ENCODE measurements at regions of chrX and their contacts with region 1.

Region 1: GRCh38 chrX:117743469-117744251 is 372.9 kb downstream of the KLHL13 start:
- DNase-seq: peak; percentile 9
- H3K4me3 ChIP-seq: no peak overlapping the region
- H3K27ac ChIP-seq: no peak overlapping the region
- H3K4me1 ChIP-seq: no peaks in the 10 kb centered on the region
- H3K27me3 ChIP-seq: no peaks in the 10 kb centered on the region
- CTCF ChIP-seq: peak in 4 of 5 experiments; percentile 19 to 37 (median 27)
- EP300 ChIP-seq: no peak
- POLR2A ChIP-seq: no peak

Region 2: DNA sequence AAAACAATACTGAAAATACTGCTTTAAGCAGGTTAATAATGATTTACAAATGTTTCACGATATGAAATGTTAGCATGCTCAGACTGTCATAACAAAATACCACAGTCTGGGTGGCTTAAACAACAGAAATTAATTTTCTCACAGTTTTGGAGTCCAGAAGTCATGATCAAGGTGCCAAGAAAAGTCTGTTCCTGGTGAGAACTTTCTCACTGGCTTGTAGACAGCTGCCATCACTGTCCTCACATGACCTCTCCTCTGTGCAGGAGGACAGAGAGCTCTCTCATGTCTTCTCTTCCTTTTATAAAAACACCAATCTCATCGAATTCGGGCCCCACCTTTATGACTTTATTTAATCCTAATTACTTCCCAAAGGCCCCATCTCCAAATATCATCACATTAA is 53.7 kb before region 1 on chrX:
- in situ Hi-C with region 1: no loop called
- intact Hi-C with region 1: no loop called
- DNase-seq: no peak
- H3K4me3 ChIP-seq: no peak overlapping the region
- H3K27ac ChIP-seq: no peak overlapping the region
- H3K4me1 ChIP-seq: no peaks in the 10 kb centered on the region
- H3K27me3 ChIP-seq: no peaks in the 10 kb centered on the region
- CTCF ChIP-seq: no peak
- EP300 ChIP-seq: no peak
- POLR2A ChIP-seq: no peak

Region 3: GRCh38 chrX:117803463-117803862 is 59.8 kb after region 1 on chrX:
- in situ Hi-C with region 1: no loop called
- intact Hi-C with region 1: loop called (anchors 2 kb)
- DNase-seq: no peak
- H3K4me3 ChIP-seq: no peak overlapping the region
- H3K27ac ChIP-seq: no peak overlapping the region
- H3K4me1 ChIP-seq: no peaks in the 10 kb centered on the region
- H3K27me3 ChIP-seq: no peaks in the 10 kb centered on the region
- CTCF ChIP-seq: no peak
- EP300 ChIP-seq: no peak
- POLR2A ChIP-seq: no peak